Naive thymus-derived CD4-positive, alpha-beta T cell (primary cell): ENCODE measurements at regions of chr9 and their contacts with region 1.

Region 1: DNA sequence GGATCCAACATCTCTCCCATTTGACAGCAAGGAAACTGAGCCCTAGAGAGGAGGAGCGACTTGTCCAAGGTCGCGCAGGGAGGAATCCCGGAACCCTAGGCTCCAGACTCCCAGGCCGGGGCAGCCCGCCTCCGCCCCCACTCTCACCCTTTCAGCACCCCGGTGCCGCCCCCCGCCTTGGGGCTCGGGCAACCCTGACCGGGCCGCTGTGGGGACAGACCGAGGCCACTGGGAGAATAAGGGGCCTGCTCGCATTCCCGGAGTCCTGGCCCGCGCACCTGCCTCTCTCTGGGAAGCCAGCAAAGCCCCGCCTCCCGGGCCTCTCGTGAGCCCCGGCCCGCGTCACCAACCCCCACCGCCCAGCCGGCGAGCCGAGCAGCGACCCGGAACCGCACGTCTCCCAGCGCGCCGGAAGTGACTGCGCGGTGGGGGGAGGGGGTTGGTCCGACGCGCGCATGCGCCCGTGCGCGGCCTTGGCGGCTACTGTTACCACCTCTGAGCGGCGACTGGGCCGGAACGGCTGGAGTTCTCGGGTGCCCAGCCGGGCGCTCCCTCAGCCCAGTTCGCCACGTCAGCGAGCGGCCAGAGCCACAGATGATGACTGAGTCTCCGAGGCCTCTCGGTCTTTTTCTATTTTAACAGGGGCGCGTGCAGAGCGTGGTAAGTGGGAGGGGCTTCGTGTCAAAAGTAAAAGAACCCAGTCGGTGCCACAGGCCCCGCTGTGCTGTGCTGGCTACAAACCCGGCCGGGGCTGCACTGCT is at the start of gene GOLGA1:
- DNase-seq: peak; percentile 90 to 96 (median 94)
- ATAC-seq: peak; percentile 93
- H3K4me3 ChIP-seq: peak within 1 kb of the TSS; percentile 90
- H3K4me3 Mint-ChIP-seq: peak within 1 kb of the TSS; percentile 80 to 99 (median 92)
- H3K27ac ChIP-seq: peak within 1 kb of the TSS; percentile 95
- H3K27ac Mint-ChIP-seq: peak within 1 kb of the TSS; percentile 91 to 100 (median 98)
- H3K4me1 ChIP-seq: peaks cover 8% of the 10 kb centered on the region in 2 donors
- H3K4me1 Mint-ChIP-seq: peaks cover 16 to 44% (median 35%) of the 10 kb centered on the region in 7 donors
- H3K27me3 ChIP-seq: no peaks in the 10 kb centered on the region
- H3K27me3 Mint-ChIP-seq: no peaks in the 10 kb centered on the region
- total RNA-seq, gene GOLGA1: 19.6 to 37.8 (median 30.5) TPM

Region 2: GRCh38 chr9:123929870-123930831 is 1010.7 kb before region 1 on chr9 and contains the start of gene DENND1A:
- CTCF ChIA-PET with region 1: no interaction called
- POLR2A ChIA-PET with region 1: no interaction called
- intact Hi-C with region 1: loop called in 1 of 2 experiments (anchors 10 kb)
- DNase-seq: peak; percentile 69 to 89 (median 79)
- ATAC-seq: peak; percentile 96
- H3K4me3 ChIP-seq: peak within 1 kb of the TSS; percentile 58
- H3K4me3 Mint-ChIP-seq: peak within 1 kb of the TSS; percentile 84 to 96 (median 88)
- H3K27ac ChIP-seq: peak within 1 kb of the TSS; percentile 73
- H3K27ac Mint-ChIP-seq: peak within 1 kb of the TSS; percentile 76 to 95 (median 88)
- H3K4me1 ChIP-seq: peaks cover 7 to 20% of the 10 kb centered on the region in 2 donors
- H3K4me1 Mint-ChIP-seq: peaks cover 32 to 48% (median 45%) of the 10 kb centered on the region in 7 donors
- H3K27me3 ChIP-seq: no peaks in the 10 kb centered on the region
- H3K27me3 Mint-ChIP-seq: peaks cover 0 to 14% (median 0%) of the 10 kb centered on the region in 5 donors
- total RNA-seq, gene DENND1A: 14.5 to 41.1 (median 17.1) TPM

Region 3: GRCh38 chr9:124868511-124869465 is 72.1 kb before region 1 on chr9:
- CTCF ChIA-PET with region 1: no interaction called
- POLR2A ChIA-PET with region 1: interaction called, 3 read pairs
- intact Hi-C with region 1: loop called (anchors 1 kb)
- DNase-seq: peak; percentile 84 to 99 (median 91)
- ATAC-seq: peak; percentile 89
- H3K4me3 ChIP-seq: peak overlapping the region; percentile 95
- H3K4me3 Mint-ChIP-seq: peak overlapping the region; percentile 87 to 96 (median 93)
- H3K27ac ChIP-seq: peak overlapping the region; percentile 87
- H3K27ac Mint-ChIP-seq: peak overlapping the region; percentile 82 to 98 (median 89)
- H3K4me1 ChIP-seq: peaks cover 29 to 39% of the 10 kb centered on the region in 2 donors
- H3K4me1 Mint-ChIP-seq: peaks cover 20 to 55% (median 47%) of the 10 kb centered on the region in 7 donors
- H3K27me3 ChIP-seq: no peaks in the 10 kb centered on the region
- H3K27me3 Mint-ChIP-seq: no peaks in the 10 kb centered on the region

Region 4: GRCh38 chr9:124980429-124980828 is 39.6 kb after region 1 on chr9:
- CTCF ChIA-PET with region 1: no interaction called
- POLR2A ChIA-PET with region 1: interaction called, 3 read pairs
- intact Hi-C with region 1: loop called in 1 of 2 experiments (anchors 5 kb)
- DNase-seq: no peak
- ATAC-seq: no peak
- H3K4me3 ChIP-seq: no peak overlapping the region
- H3K4me3 Mint-ChIP-seq: no peak overlapping the region
- H3K27ac ChIP-seq: no peak overlapping the region
- H3K27ac Mint-ChIP-seq: peak overlapping the region in 1 of 9 donors; percentile 56
- H3K4me1 ChIP-seq: no peaks in the 10 kb centered on the region
- H3K4me1 Mint-ChIP-seq: no peaks in the 10 kb centered on the region
- H3K27me3 ChIP-seq: no peaks in the 10 kb centered on the region
- H3K27me3 Mint-ChIP-seq: no peaks in the 10 kb centered on the region

Region 5: GRCh38 chr9:125189361-125190289 is 248.8 kb after region 1 on chr9 and contains the start of gene PPP6C:
- CTCF ChIA-PET with region 1: interaction called, 3 read pairs
- POLR2A ChIA-PET with region 1: interaction called, 5 read pairs
- intact Hi-C with region 1: loop called (anchors 1 kb)
- DNase-seq: peak; percentile 92 to 97 (median 96)
- ATAC-seq: peak; percentile 98
- H3K4me3 ChIP-seq: peak within 1 kb of the TSS; percentile 99
- H3K4me3 Mint-ChIP-seq: peak within 1 kb of the TSS; percentile 89 to 99 (median 96)
- H3K27ac ChIP-seq: peak within 1 kb of the TSS; percentile 98
- H3K27ac Mint-ChIP-seq: peak within 1 kb of the TSS; percentile 90 to 97 (median 95)
- H3K4me1 ChIP-seq: peaks cover 35 to 51% of the 10 kb centered on the region in 2 donors
- H3K4me1 Mint-ChIP-seq: peaks cover 35 to 79% (median 57%) of the 10 kb centered on the region in 7 donors
- H3K27me3 ChIP-seq: no peaks in the 10 kb centered on the region
- H3K27me3 Mint-ChIP-seq: peaks cover 0 to 4% (median 0%) of the 10 kb centered on the region in 5 donors
- total RNA-seq, gene PPP6C: 32.9 to 54.2 (median 49.5) TPM

Region 6: GRCh38 chr9:125261501-125262293 is 320.8 kb after region 1 on chr9 and contains the start of gene GAPVD1:
- CTCF ChIA-PET with region 1: no interaction called
- POLR2A ChIA-PET with region 1: no interaction called
- intact Hi-C with region 1: loop called (anchors 1 kb)
- DNase-seq: peak; percentile 83 to 95 (median 89)
- ATAC-seq: peak; percentile 97
- H3K4me3 ChIP-seq: peak within 1 kb of the TSS; percentile 97
- H3K4me3 Mint-ChIP-seq: peak within 1 kb of the TSS; percentile 82 to 99 (median 98)
- H3K27ac ChIP-seq: peak within 1 kb of the TSS; percentile 94
- H3K27ac Mint-ChIP-seq: peak within 1 kb of the TSS; percentile 83 to 99 (median 94)
- H3K4me1 ChIP-seq: peaks cover 8 to 24% of the 10 kb centered on the region in 2 donors
- H3K4me1 Mint-ChIP-seq: peaks cover 21 to 48% (median 42%) of the 10 kb centered on the region in 7 donors
- H3K27me3 ChIP-seq: no peaks in the 10 kb centered on the region
- H3K27me3 Mint-ChIP-seq: no peaks in the 10 kb centered on the region
- total RNA-seq, gene GAPVD1: 57.3 to 68.9 (median 65.0) TPM